CD4-positive, alpha-beta memory T cell (primary cell): ENCODE measurements at regions of chr19 and their contacts with region 1.

Region 1: DNA sequence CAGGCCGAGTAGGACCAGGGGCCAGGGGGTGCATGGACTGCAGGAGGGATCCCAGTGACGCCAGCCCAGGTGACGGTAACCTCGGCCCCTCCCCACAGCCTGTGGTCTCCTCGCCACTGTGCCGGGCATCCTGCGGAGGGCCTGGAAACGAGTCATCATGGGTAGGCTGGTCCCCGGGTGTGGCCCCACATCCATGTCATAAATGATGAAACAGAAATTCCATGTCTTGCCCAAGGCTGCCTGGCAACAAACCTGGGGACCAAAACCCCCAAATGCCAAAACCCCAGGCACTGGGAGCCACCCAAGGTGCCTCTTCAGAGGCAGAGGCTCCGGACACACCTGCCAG is 20.9 kb downstream of the MAP2K2 start:
- DNase-seq: no peak
- H3K4me3 ChIP-seq: no peak overlapping the region
- H3K4me3 Mint-ChIP-seq: no peak overlapping the region
- H3K27ac ChIP-seq: no peak overlapping the region
- H3K27ac Mint-ChIP-seq: peak overlapping the region in 1 of 7 donors; percentile 91
- H3K4me1 ChIP-seq: peaks cover 42% of the 10 kb centered on the region
- H3K4me1 Mint-ChIP-seq: peaks cover 15 to 43% (median 22%) of the 10 kb centered on the region in 4 donors
- H3K27me3 ChIP-seq: no peaks in the 10 kb centered on the region
- H3K27me3 Mint-ChIP-seq: no peaks in the 10 kb centered on the region

Region 2: DNA sequence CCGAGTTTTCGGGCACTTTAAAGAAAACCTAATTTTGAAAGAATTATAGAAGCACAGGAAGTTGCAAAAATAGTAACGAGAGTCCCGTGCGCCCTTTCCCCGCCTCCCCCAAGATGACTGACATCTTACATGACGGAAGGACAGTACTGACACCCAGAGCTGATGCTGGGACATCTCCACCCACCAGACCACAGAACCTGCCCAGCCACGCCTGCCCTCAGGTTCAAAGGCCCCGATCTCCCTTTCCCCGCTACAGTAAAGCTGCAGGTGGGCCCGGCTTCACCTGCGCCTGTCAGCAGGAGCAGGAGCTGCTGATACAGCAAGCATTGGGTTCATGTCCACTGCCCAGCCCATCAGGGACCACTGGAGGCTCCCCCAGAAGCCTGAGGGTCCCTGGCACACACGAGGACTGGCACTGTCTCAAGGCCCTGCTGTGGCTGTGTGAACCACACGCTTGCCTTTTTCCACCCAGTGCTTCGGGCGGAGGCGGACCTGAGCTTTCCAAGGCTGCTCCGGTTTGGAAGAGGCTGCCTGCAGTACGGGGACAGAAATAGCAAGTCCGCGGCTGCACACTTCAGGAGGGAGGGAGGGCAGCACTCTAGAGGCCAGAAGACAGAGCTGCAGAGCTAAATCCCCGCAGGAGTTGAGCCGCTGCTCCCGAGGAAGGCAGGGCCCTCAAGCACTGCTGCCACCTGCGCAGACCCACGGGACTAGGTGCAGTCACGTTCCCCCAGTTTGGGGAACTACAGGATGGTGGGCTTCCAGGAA is 12.2 kb after region 1 on chr19:
- CTCF ChIA-PET with region 1: interaction called, 4 read pairs
- POLR2A ChIA-PET with region 1: interaction called, 31 read pairs
- intact Hi-C with region 1: no loop called
- DNase-seq: peak; percentile 71 to 80 (median 77)
- H3K4me3 ChIP-seq: peak overlapping the region in 1 of 2 donors; percentile 36
- H3K4me3 Mint-ChIP-seq: peak overlapping the region; percentile 5 to 72 (median 64)
- H3K27ac ChIP-seq: peak overlapping the region; percentile 49
- H3K27ac Mint-ChIP-seq: peak overlapping the region; percentile 65 to 92 (median 91)
- H3K4me1 ChIP-seq: peaks cover 34% of the 10 kb centered on the region
- H3K4me1 Mint-ChIP-seq: peaks cover 11 to 42% (median 20%) of the 10 kb centered on the region in 4 donors
- H3K27me3 ChIP-seq: no peaks in the 10 kb centered on the region
- H3K27me3 Mint-ChIP-seq: no peaks in the 10 kb centered on the region